ENCODE measurements at regions of chr11 and their contacts with region 1.

Region 1: GRCh38 chr11:59611570-59612565 is 3.7 kb downstream of the OSBP start:
- DNase-seq: peak; percentile 41 to 73
- ATAC-seq: peak; percentile 43

Region 2: GRCh38 chr11:59401262-59401552 is 210.7 kb before region 1 on chr11:
- intact Hi-C with region 1: no loop called
- DNase-seq: no peak
- ATAC-seq: no peak

Region 3: GRCh38 chr11:59534676-59535075 is 77.2 kb before region 1 on chr11:
- intact Hi-C with region 1: loop called in 1 of 2 experiments (anchors 5 kb)
- DNase-seq: no peak
- ATAC-seq: no peak

Region 4: DNA sequence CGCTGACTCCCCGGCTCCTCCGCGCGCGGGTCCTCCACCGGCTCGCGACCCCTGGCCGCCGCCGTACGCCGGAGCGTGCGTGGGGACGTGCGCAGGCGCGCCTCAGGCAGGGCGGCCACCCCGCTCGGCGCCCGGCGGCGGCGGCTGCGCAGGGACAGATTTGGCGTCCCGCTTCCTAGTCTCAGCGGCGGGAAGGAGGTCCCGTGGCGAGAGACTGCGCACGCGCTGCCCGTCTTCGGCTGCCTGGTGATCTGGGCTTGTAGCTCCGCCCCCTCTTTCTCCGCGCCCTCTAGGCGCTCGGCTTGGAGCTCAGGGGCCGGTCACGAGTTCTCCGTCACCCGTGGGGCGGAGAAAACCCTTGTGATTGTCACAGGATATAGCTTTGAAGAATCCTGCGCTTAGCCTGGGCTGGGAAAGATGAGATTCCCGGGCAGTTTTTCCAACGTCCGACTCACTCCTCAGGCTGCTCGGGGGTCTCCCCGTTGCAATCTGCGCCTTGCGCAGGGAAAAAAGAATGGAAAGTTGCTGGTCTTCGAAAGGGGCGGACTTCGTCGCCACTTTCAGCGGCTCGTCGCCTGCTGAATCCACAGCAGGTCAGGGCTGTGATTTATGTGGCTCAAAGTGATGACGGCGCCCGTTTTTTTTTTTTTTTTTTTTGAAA is 57.2 kb after region 1 on chr11 and contains the start of gene PATL1:
- intact Hi-C with region 1: loop called in 1 of 2 experiments (anchors 5 kb)
- DNase-seq: peak; percentile 99
- ATAC-seq: peak; percentile 93
- total RNA-seq, gene PATL1: 33.9 to 38.1 TPM

Region 5: DNA sequence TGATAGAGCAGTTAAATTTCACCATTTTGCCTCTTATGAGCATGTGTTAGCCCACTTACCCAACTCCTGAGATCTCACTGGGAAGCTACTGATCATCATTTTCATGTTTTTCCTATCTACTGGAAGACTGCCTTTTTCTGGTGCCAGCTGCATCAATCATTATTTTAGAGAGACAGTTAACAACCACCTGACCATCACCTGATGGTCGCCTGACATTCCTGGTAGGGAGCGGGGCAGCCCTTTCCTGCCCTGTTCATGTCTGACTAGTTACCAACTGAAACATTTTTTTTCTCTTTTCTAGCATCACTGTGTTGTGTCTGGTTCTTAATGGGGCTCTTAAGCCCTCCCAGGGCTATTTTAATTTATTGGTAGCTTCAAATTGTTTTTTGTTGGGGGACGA is 77.1 kb after region 1 on chr11:
- intact Hi-C with region 1: no loop called
- DNase-seq: no peak
- ATAC-seq: peak; percentile 54

Measured in left colon (tissue), 2 donors.